HAP-1 (cell line): ENCODE measurements at regions of chr3 and their contacts with region 1.

Region 1: GRCh38 chr3:47420511-47421484 is 40.0 kb downstream of the PTPN23 start:
- DNase-seq: peak; percentile 78 to 93
- H3K4me3 ChIP-seq: no peak overlapping the region
- H3K4me1 ChIP-seq: peaks cover 3% of the 10 kb centered on the region
- H3K27me3 ChIP-seq: no peaks in the 10 kb centered on the region

Region 2: GRCh38 chr3:47282424-47283192 is 138.2 kb before region 1 on chr3 and contains the starts of genes KIF9 and KLHL18:
- in situ Hi-C with region 1: no loop called
- DNase-seq: peak; percentile 87 to 97
- H3K4me3 ChIP-seq: peak within 1 kb of the TSS; percentile 94
- H3K4me1 ChIP-seq: peaks cover 6% of the 10 kb centered on the region
- H3K27me3 ChIP-seq: no peaks in the 10 kb centered on the region

Region 3: GRCh38 chr3:47799733-47800132 is 378.9 kb after region 1 on chr3:
- in situ Hi-C with region 1: loop called (anchors 10 kb)
- DNase-seq: no peak
- H3K4me3 ChIP-seq: no peak overlapping the region
- H3K4me1 ChIP-seq: peaks cover 14% of the 10 kb centered on the region
- H3K27me3 ChIP-seq: no peaks in the 10 kb centered on the region